ENCODE measurements at regions of chr2 and their contacts with region 1.

Region 1: GRCh38 chr2:69914170-69914960 is 544 bp upstream of the MXD1 start:
- DNase-seq: peak; percentile 98 to 100 (median 100)
- ATAC-seq: peak; percentile 95 to 98 (median 97)
- H3K4me3 ChIP-seq: peak overlapping the region; percentile 49 to 88 (median 80)
- H3K27ac ChIP-seq: peak overlapping the region; percentile 71 to 99 (median 96)
- H3K4me1 ChIP-seq: peaks cover 0 to 56% (median 14%) of the 10 kb centered on the region in 12 donors
- H3K27me3 ChIP-seq: no peaks in the 10 kb centered on the region
- CTCF ChIP-seq: peak in 7 of 12 donors; percentile 12 to 51 (median 40)
- POLR2A ChIP-seq: peak; percentile 62 to 75

Region 2: DNA sequence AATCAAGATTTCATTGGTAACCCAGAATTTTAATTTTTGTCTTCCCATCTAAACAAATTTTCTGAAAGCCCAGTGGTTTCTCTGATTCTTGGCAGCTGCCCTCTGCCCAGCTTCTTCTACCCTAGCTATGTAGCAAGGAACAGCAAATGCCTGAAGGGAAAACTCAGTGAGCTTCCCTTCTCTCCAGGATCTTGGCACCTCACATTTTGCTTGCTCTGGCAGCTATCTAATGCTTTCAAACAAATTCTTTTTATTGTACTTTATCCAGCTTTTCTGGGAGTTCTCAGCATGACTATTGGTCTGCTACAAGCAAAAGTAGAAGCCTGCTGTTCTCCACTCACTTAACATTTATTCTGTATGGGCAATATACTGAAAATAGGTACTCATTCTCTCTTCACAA is 509.1 kb before region 1 on chr2:
- intact Hi-C with region 1: no loop called
- DNase-seq: no peak
- ATAC-seq: no peak
- H3K4me3 ChIP-seq: no peak overlapping the region
- H3K27ac ChIP-seq: no peak overlapping the region
- H3K4me1 ChIP-seq: no peaks in the 10 kb centered on the region
- H3K27me3 ChIP-seq: no peaks in the 10 kb centered on the region
- CTCF ChIP-seq: no peak
- POLR2A ChIP-seq: no peak

Region 3: DNA sequence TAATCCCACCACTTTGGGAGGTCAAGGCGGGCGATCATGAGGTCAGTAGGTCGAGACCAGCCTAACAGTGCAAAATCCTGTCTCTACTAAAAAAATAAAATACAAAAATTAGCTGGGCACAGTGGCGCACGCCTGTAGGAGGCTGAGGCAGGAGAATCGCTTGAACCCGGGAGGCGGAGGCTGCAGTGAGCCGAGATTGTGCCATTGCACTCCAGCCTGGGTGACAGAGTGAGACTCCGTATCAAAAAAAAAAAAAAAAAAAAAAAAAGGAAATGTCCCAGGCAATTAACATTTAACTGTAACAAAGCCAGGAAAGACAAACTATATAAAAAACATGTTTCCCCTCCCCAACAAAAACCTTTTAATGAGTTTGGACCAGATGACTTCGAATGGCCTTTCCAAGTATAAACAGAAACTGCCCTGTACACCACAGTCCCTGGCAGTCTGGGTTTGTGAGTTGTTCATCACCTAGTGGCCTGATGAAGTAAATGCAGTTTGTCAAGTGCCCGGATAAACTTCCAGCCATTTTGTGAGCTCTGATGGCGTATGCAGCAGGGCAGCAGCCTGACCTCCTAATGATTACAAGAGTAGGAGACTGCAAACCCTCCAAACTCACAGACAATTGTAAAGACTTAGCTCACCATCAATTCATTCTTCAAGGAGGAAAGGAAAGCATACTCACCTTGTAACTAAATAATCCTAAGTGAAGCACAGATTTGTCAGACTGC is 156.3 kb after region 1 on chr2:
- intact Hi-C with region 1: loop called (anchors 1 to 5 kb)
- DNase-seq: peak in 4 of 5 donors; percentile 60 to 81 (median 72)
- ATAC-seq: peak; percentile 93 to 98 (median 97)
- H3K4me3 ChIP-seq: peak overlapping the region in 5 of 12 donors; percentile 1 to 36 (median 15)
- H3K27ac ChIP-seq: peak overlapping the region; percentile 35 to 83 (median 75)
- H3K4me1 ChIP-seq: peaks cover 0 to 39% (median 14%) of the 10 kb centered on the region in 12 donors
- H3K27me3 ChIP-seq: no peaks in the 10 kb centered on the region
- CTCF ChIP-seq: peak; percentile 65 to 90 (median 83)
- POLR2A ChIP-seq: no peak

Region 4: GRCh38 chr2:70078384-70078783 is 164.0 kb after region 1 on chr2:
- intact Hi-C with region 1: loop called in 5 of 10 experiments (anchors 5 kb)
- DNase-seq: no peak
- ATAC-seq: peak in 1 of 4 donors; percentile 74
- H3K4me3 ChIP-seq: no peak overlapping the region
- H3K27ac ChIP-seq: peak overlapping the region in 3 of 12 donors; percentile 20 to 62 (median 33)
- H3K4me1 ChIP-seq: peaks cover 0 to 26% (median 0%) of the 10 kb centered on the region in 12 donors
- H3K27me3 ChIP-seq: no peaks in the 10 kb centered on the region
- CTCF ChIP-seq: no peak
- POLR2A ChIP-seq: no peak

Region 5: DNA sequence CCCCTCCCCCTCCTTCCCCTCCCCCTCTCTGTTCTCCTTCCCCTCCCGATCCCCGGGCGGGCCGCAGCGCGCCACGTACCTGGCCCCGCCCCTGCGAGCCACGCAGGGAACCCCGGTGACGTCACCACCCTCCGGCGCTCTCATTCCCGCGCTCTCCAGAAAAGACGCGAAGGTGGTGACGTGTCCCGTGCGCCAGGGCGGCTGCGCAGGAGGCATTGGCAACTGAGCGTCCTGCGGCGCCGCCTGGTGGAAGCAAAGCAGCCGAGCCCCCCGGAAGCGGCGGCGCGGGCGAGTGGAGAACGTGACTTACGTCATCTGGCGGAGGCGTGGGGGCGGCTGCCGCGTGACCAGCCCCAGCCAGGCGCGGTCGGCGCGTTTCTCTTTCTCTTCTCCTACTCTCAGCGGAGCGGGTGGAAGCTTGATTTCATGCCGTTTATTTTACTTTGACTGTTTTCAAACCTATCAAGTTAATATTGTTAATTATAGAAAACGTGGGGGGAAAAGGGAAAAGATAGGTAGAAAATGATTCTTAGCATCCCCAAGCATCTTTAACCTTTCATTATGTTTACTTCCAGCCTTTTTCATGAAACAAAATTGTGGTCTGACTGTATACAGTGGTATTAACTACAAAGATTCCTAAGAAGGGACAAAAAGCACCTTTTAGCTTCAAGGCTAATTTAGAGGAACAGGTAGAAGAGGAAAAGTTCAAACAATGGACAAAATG is 228.4 kb after region 1 on chr2:
- intact Hi-C with region 1: loop called in 9 of 10 experiments (anchors 1 to 5 kb)
- DNase-seq: peak; percentile 99 to 100 (median 99)
- ATAC-seq: peak; percentile 90 to 91 (median 90)
- H3K4me3 ChIP-seq: peak overlapping the region in 11 of 12 donors; percentile 26 to 92 (median 73)
- H3K27ac ChIP-seq: peak overlapping the region; percentile 94 to 100 (median 98)
- H3K4me1 ChIP-seq: peaks cover 2 to 35% (median 20%) of the 10 kb centered on the region in 12 donors
- H3K27me3 ChIP-seq: no peaks in the 10 kb centered on the region
- CTCF ChIP-seq: peak; percentile 91 to 99 (median 97)
- POLR2A ChIP-seq: peak in 1 of 2 donors; percentile 47

Region 6: DNA sequence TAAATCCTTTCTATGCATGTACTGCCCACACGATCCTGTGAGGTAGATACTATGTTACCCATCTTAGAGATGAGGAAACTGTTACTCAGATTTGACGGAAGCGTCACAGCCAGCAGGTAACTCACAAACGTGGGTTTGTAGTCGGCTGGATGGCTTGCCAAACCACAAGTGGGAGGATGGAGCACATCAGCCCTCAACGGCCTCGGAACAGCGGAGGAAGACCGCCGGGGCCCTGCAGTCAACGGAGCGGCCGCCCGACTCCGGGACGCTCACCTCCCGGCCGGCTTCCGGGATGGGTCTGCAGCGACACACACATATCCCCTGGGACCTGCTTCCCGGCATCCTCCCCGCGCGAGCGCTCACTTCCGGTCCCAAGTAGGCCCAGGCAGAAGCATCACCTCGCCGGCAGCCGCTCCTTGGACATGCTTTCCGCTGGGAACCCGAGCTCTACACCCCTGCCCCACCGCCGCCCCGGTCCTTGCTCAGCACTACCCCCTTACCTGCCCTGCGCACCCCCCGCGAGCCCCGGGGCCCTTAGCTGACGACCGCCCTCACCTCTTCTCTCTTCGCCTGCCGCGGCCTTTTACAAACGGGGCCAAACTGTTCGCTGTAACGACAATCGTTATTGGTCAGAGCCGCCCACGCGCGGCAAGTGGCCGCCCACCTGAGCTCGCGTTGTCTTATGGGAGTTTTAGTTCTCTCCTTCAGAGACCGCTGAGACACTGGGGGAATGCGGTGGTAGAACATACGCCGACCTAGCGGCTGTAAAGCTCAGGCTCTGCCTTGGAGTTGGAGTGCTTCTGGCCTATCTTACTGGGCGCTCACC is 276.3 kb after region 1 on chr2 and contains the start of gene C2orf42:
- intact Hi-C with region 1: loop called in 1 of 10 experiments (anchors 2 kb)
- DNase-seq: peak; percentile 96 to 97 (median 97)
- ATAC-seq: peak; percentile 96 to 98 (median 98)
- H3K4me3 ChIP-seq: peak within 1 kb of the TSS; percentile 48 to 99 (median 80)
- H3K27ac ChIP-seq: peak within 1 kb of the TSS; percentile 87 to 98 (median 94)
- H3K4me1 ChIP-seq: peaks cover 0 to 13% (median 4%) of the 10 kb centered on the region in 12 donors
- H3K27me3 ChIP-seq: no peaks in the 10 kb centered on the region
- CTCF ChIP-seq: peak in 2 of 12 donors; percentile 19 to 33
- POLR2A ChIP-seq: peak in 1 of 2 donors; percentile 90
- total RNA-seq, gene C2orf42: 6.2 to 14.9 (median 10.9) TPM

Region 7: GRCh38 chr2:70201831-70202806 is 287.8 kb after region 1 on chr2:
- intact Hi-C with region 1: no loop called
- DNase-seq: no peak
- ATAC-seq: no peak
- H3K4me3 ChIP-seq: no peak overlapping the region
- H3K27ac ChIP-seq: no peak overlapping the region
- H3K4me1 ChIP-seq: no peaks in the 10 kb centered on the region
- H3K27me3 ChIP-seq: no peaks in the 10 kb centered on the region
- CTCF ChIP-seq: no peak
- POLR2A ChIP-seq: no peak

Region 8: DNA sequence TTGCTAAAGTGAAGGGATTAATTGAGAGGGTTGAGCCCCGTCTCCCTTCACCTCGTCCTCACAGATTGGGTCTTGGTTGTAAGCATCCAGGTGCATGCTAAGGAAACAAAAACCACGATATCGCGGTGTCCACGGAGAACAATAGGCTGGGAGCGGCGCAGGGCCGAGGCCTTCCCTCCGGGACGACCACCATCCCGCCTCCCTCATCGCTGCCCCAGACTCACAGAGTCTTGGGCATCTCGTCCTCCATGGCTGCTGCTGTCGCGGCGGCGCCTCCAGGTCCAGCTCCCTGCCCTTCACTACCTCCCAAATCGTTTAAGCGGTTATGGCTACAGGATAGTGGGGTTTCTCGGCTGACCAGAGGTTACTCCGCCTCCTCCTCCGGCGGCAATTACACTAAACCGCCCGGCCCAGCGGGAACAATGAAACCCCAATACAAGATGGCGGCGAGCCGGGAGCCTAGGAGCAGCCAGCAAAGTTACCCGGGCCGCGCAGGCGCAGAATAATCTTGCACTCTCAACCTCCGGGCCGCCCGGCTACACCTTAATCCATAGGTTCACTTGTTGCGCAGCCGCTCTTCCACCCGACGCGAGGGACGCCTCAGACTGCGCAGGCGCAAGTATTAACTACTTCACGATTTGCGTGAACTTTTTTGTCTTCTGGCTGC is 333.9 kb after region 1 on chr2 and contains the start of gene TIA1:
- intact Hi-C with region 1: loop called in 2 of 10 experiments (anchors 5 kb)
- DNase-seq: peak; percentile 98 to 99 (median 99)
- ATAC-seq: peak; percentile 98 to 99 (median 98)
- H3K4me3 ChIP-seq: peak within 1 kb of the TSS; percentile 52 to 98 (median 82)
- H3K27ac ChIP-seq: peak within 1 kb of the TSS; percentile 91 to 99 (median 96)
- H3K4me1 ChIP-seq: peaks cover 2 to 44% (median 33%) of the 10 kb centered on the region in 12 donors
- H3K27me3 ChIP-seq: no peaks in the 10 kb centered on the region
- CTCF ChIP-seq: no peak
- POLR2A ChIP-seq: peak; percentile 23 to 86
- total RNA-seq, gene TIA1: 26.1 to 53.0 (median 42.1) TPM

Region 9: DNA sequence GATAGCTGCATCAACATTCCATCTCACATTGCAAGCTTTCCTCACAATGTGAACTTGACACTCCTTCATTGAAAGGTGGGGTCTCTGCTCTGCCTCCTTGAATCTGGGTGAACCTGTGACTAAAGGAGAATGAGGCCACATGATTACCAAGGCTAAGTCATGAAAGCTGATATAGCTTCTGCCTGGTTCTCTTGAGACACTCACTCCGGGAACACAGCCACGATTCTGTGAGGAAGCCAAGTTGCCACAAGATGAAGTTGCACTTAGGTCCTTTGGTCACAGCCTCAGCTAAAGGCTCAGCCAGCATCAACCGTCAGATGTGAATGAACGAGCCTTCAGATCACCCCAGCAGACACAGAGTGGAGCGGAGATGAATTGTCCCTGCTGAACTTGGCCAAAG is 482.2 kb after region 1 on chr2:
- intact Hi-C with region 1: no loop called
- DNase-seq: no peak
- ATAC-seq: no peak
- H3K4me3 ChIP-seq: no peak overlapping the region
- H3K27ac ChIP-seq: no peak overlapping the region
- H3K4me1 ChIP-seq: no peaks in the 10 kb centered on the region
- H3K27me3 ChIP-seq: peaks cover 0 to 18% (median 0%) of the 10 kb centered on the region in 9 donors
- CTCF ChIP-seq: no peak
- POLR2A ChIP-seq: no peak